Right ventricle myocardium superior (tissue), 1 donor: ENCODE measurements at regions of chr13 and their contacts with region 1.

Region 1: GRCh38 chr13:108895220-108895704 is 265.9 kb downstream of the MYO16 start:
- DNase-seq: no peak
- ATAC-seq: no peak

Region 2: GRCh38 chr13:108322206-108322824 is 572.9 kb before region 1 on chr13:
- intact Hi-C with region 1: loop called (anchors 5 kb)
- DNase-seq: no peak
- ATAC-seq: peak; percentile 81

Region 3: GRCh38 chr13:108342369-108343289 is 552.6 kb before region 1 on chr13:
- intact Hi-C with region 1: loop called (anchors 5 kb)
- DNase-seq: no peak
- ATAC-seq: peak; percentile 78

Region 4: DNA sequence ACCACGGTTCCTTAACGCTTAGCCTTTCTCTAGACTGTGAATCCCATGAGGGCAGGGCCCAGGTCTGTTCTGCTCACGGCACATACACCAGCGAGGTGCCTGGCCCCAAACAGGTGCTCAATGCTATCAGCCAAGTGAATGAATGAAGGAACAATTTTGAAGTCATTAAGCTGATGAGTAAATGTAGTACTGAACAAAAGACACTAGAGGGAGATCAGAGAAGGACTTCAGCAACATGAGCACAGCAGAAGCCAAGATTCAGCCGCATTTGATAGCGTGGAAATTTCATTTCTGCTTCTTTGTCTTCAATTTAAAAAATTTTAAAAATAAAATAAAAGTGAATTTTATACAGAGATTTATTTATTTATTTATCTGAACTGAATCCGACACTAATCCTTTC is 285.9 kb before region 1 on chr13:
- intact Hi-C with region 1: loop called (anchors 5 kb)
- DNase-seq: no peak
- ATAC-seq: peak; percentile 85

Region 5: GRCh38 chr13:108850691-108851090 is 44.6 kb before region 1 on chr13:
- intact Hi-C with region 1: no loop called
- DNase-seq: no peak
- ATAC-seq: no peak